ENCODE measurements at regions of chr3 and their contacts with region 1.

Region 1: DNA sequence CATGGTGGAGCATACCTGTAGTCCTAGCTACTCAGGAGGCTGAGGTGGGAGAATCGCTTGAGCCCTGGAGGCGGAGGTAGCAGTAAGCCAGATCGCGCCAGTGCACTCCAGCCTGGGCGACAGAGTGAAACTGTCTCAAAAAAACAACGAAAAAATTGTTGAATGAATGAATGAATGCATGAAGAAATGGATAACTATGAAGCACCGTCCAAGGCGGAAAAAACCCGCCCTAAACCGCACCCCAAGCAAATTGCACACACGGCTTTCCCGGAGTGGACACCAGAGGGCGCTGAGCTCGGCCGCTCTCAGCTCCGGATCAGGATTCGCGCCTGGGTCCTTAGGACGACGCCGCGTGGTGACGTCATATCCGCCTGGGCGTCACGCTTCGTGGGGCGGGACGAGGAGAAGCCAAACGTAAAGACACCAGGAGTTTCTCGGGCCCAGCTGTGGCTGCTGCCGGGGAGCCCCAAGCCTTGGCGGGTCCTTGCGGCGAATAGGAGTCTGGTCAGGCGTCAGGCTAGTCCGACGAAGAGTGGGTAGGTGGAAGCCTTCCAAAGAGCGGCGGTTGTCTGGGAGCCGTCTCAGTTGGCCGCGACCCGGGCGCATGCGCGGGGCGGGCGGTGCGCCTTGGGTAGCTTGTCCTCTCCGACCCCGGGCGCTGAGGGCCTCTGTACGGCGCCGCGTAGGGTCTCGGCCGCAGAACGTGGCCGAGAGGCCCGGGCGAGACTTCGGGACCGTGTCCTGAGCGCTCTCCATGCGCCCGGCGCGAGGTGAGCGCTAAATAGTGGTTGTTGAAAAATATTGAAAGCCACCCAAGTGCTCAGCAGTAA is at the starts of genes HTD2 and RPP14:
- DNase-seq: peak; percentile 98 to 100 (median 99)
- ATAC-seq: peak; percentile 87
- H3K4me3 ChIP-seq: peak within 1 kb of the TSS; percentile 81
- H3K4me3 Mint-ChIP-seq: peak within 1 kb of the TSS; percentile 97
- H3K27ac ChIP-seq: peak within 1 kb of the TSS; percentile 91 to 98
- H3K27ac Mint-ChIP-seq: peak within 1 kb of the TSS; percentile 98
- H3K4me1 ChIP-seq: peaks cover 31% of the 10 kb centered on the region
- H3K4me1 Mint-ChIP-seq: peaks cover 35% of the 10 kb centered on the region
- H3K27me3 ChIP-seq: peaks cover 8 to 12% of the 10 kb centered on the region in 2 experiments
- H3K27me3 Mint-ChIP-seq: peaks cover 13% of the 10 kb centered on the region
- CTCF ChIP-seq: peak; percentile 93
- total RNA-seq, gene HTD2: 7.2 to 7.3 TPM
- total RNA-seq, gene RPP14: 17.7 to 19.7 TPM

Region 2: DNA sequence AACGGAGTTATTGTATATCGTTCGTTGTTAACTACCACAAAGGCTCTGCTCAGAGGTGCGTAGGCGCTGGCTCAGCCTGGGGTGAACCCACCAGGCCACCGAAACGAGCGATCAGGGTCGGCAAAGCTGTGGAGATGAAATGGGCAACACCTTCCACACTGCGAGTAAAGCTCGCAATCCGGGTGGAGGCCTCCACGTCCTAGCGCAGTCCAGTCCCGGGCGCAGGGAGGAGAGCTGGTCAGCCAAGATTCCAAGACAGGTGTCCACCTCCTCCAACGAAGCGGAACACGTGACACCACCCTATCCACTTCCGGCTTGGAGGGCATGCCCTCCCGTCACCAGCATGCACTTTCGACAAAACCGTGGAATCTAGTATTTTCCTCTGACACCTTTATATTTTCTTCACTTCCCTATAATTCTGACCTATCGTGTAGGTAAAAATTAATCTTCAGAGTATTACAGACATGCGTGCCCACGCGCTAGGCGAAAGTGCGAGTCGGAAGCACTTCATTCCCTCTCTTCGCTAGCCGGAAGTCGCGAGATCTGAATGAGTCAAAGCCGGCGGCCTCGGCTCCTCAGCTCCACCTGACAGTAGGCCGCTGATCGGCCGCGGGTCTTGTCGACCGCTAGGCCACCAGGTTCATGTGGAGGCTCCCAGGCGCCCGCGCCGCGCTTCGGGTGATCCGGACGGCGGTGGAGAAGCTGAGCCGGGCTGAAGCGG is 750.2 kb before region 1 on chr3 and contains the start of gene PDE12:
- CTCF ChIA-PET with region 1: no interaction called
- POLR2A ChIA-PET with region 1: interaction called, 9 read pairs
- intact Hi-C with region 1: loop called in 1 of 2 experiments (anchors 10 kb)
- DNase-seq: peak; percentile 66 to 92 (median 78)
- ATAC-seq: peak; percentile 67
- H3K4me3 ChIP-seq: peak within 1 kb of the TSS; percentile 88
- H3K4me3 Mint-ChIP-seq: peak within 1 kb of the TSS; percentile 94
- H3K27ac ChIP-seq: peak within 1 kb of the TSS; percentile 84 to 98
- H3K27ac Mint-ChIP-seq: peak within 1 kb of the TSS; percentile 93
- H3K4me1 ChIP-seq: peaks cover 34% of the 10 kb centered on the region
- H3K4me1 Mint-ChIP-seq: peaks cover 45% of the 10 kb centered on the region
- H3K27me3 ChIP-seq: no peaks in the 10 kb centered on the region
- H3K27me3 Mint-ChIP-seq: no peaks in the 10 kb centered on the region
- CTCF ChIP-seq: no peak
- total RNA-seq, gene PDE12: 40.5 to 40.9 TPM

Region 3: GRCh38 chr3:58008140-58009025 is 297.7 kb before region 1 on chr3 and contains the start of gene FLNB:
- CTCF ChIA-PET with region 1: interaction called, 4 read pairs
- POLR2A ChIA-PET with region 1: interaction called, 13 read pairs
- intact Hi-C with region 1: loop called (anchors 5 to 10 kb)
- DNase-seq: peak; percentile 64 to 94 (median 76)
- ATAC-seq: peak; percentile 82
- H3K4me3 ChIP-seq: peak within 1 kb of the TSS; percentile 99
- H3K4me3 Mint-ChIP-seq: peak within 1 kb of the TSS; percentile 84
- H3K27ac ChIP-seq: peak within 1 kb of the TSS in 1 of 2 donors; percentile 30
- H3K27ac Mint-ChIP-seq: peak within 1 kb of the TSS; percentile 77
- H3K4me1 ChIP-seq: peaks cover 49% of the 10 kb centered on the region
- H3K4me1 Mint-ChIP-seq: peaks cover 44% of the 10 kb centered on the region
- H3K27me3 ChIP-seq: no peaks in the 10 kb centered on the region
- H3K27me3 Mint-ChIP-seq: no peaks in the 10 kb centered on the region
- CTCF ChIP-seq: peak; percentile 67
- total RNA-seq, gene FLNB: 39.7 to 42.1 TPM

Region 4: DNA sequence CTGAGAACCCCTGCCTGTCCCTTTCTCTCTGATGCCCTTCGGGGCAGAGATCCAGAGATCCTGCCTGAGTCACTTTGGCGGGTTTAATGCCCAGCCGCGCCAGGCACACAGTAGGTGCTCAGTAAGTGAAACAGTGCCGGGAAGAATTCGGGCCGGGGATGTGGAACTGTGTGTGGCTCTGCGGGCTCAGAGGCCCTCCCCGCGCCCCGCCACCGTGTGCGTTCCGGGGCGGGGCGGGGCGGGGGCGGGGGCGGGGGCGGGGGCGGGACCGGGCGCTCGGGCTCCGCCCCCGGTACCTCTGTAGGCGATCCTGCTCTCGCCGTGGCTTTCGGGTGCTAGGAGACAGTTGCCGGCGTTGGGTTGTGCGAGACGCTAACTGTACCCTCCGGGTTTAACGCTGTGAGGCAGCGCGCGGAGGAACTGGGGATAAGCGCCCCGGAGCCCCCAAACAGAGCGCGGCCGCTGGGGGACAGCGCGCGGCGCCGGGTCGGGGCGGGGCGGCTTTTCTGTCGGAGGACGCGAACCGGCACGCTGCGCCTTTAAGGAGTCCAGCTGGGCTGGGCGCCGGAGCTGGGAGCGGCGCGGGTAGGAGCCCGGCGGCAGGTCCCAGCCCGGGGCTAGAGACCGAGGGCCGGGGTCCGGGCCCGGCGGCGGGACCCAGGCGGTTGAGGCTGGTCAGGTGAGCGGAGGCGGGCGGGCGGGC is 68.7 kb before region 1 on chr3 and contains the start of gene ABHD6:
- CTCF ChIA-PET with region 1: interaction called, 22 read pairs
- POLR2A ChIA-PET with region 1: interaction called, 24 read pairs
- intact Hi-C with region 1: loop called (anchors 1 to 2 kb)
- DNase-seq: peak; percentile 64 to 89 (median 79)
- ATAC-seq: peak; percentile 88
- H3K4me3 ChIP-seq: peak within 1 kb of the TSS; percentile 95
- H3K4me3 Mint-ChIP-seq: peak within 1 kb of the TSS; percentile 96
- H3K27ac ChIP-seq: peak within 1 kb of the TSS; percentile 24 to 57
- H3K27ac Mint-ChIP-seq: peak within 1 kb of the TSS; percentile 61
- H3K4me1 ChIP-seq: peaks cover 19% of the 10 kb centered on the region
- H3K4me1 Mint-ChIP-seq: peaks cover 14% of the 10 kb centered on the region
- H3K27me3 ChIP-seq: peaks cover 0 to 3% of the 10 kb centered on the region in 2 experiments
- H3K27me3 Mint-ChIP-seq: peaks cover 18% of the 10 kb centered on the region
- CTCF ChIP-seq: peak; percentile 16
- total RNA-seq, gene ABHD6: 0.71 to 1.9 TPM

Region 5: GRCh38 chr3:58414538-58415197 is 108.6 kb after region 1 on chr3:
- CTCF ChIA-PET with region 1: no interaction called
- POLR2A ChIA-PET with region 1: no interaction called
- intact Hi-C with region 1: loop called in 1 of 2 experiments (anchors 1 kb)
- DNase-seq: peak in 13 of 14 experiments; percentile 8 to 76 (median 21)
- ATAC-seq: peak; percentile 88
- H3K4me3 ChIP-seq: no peak overlapping the region
- H3K4me3 Mint-ChIP-seq: no peak overlapping the region
- H3K27ac ChIP-seq: no peak overlapping the region
- H3K27ac Mint-ChIP-seq: no peak overlapping the region
- H3K4me1 ChIP-seq: no peaks in the 10 kb centered on the region
- H3K4me1 Mint-ChIP-seq: no peaks in the 10 kb centered on the region
- H3K27me3 ChIP-seq: no peaks in the 10 kb centered on the region
- H3K27me3 Mint-ChIP-seq: no peaks in the 10 kb centered on the region
- CTCF ChIP-seq: peak; percentile 75

Region 6: GRCh38 chr3:58491506-58492402 is 185.7 kb after region 1 on chr3 and contains the start of gene KCTD6:
- CTCF ChIA-PET with region 1: interaction called, 73 read pairs
- POLR2A ChIA-PET with region 1: interaction called, 42 read pairs
- intact Hi-C with region 1: loop called in 1 of 2 experiments (anchors 1 kb)
- DNase-seq: peak; percentile 65 to 95 (median 82)
- ATAC-seq: peak; percentile 85
- H3K4me3 ChIP-seq: peak within 1 kb of the TSS; percentile 81
- H3K4me3 Mint-ChIP-seq: peak within 1 kb of the TSS; percentile 97
- H3K27ac ChIP-seq: peak within 1 kb of the TSS; percentile 16 to 30
- H3K27ac Mint-ChIP-seq: peak within 1 kb of the TSS; percentile 83
- H3K4me1 ChIP-seq: peaks cover 22% of the 10 kb centered on the region
- H3K4me1 Mint-ChIP-seq: peaks cover 65% of the 10 kb centered on the region
- H3K27me3 ChIP-seq: no peaks in the 10 kb centered on the region
- H3K27me3 Mint-ChIP-seq: no peaks in the 10 kb centered on the region
- CTCF ChIP-seq: peak; percentile 55
- total RNA-seq, gene KCTD6: 3.8 to 5.0 TPM

Region 7: DNA sequence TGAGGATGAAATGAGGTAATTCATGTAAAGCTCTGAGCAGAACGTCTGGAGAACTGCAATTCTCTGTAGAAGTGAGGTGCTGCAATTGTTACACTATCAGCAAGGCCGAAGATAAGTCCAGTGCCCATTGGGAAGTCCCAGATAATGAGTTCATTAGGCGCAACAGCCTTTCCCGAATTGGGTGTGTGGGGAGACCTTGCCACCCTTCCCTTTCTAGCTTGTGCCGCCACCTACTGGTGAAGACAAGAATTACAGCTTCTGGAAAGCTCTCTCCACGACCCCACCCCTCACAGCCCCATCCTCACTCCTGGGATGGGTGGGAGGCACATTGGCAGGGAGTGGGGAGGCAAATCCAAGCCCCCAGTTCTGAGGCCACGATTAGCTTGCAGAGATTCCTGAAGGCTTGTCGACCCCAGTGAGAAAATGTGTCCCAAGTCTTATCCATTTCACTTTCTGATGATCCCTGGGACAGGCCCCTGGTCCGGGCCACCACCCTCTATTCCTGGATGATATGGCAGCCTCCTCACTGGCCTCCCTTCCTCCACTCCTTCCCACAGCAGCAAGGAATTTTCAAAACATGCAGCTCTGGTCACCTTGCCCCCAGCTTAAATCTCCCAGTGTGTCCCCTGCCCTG is 324.1 kb after region 1 on chr3:
- CTCF ChIA-PET with region 1: interaction called, 3 read pairs
- POLR2A ChIA-PET with region 1: interaction called, 3 read pairs
- intact Hi-C with region 1: loop called (anchors 1 to 5 kb)
- DNase-seq: peak; percentile 28 to 71 (median 46)
- ATAC-seq: peak; percentile 60
- H3K4me3 ChIP-seq: no peak overlapping the region
- H3K4me3 Mint-ChIP-seq: no peak overlapping the region
- H3K27ac ChIP-seq: no peak overlapping the region
- H3K27ac Mint-ChIP-seq: no peak overlapping the region
- H3K4me1 ChIP-seq: peaks cover 3% of the 10 kb centered on the region
- H3K4me1 Mint-ChIP-seq: no peaks in the 10 kb centered on the region
- H3K27me3 ChIP-seq: peaks cover 0 to 4% of the 10 kb centered on the region in 2 experiments
- H3K27me3 Mint-ChIP-seq: no peaks in the 10 kb centered on the region
- CTCF ChIP-seq: peak; percentile 81

Measured in CD4-positive, alpha-beta T cell (primary cell).